MCF 10A (cell line): ENCODE measurements at regions of chrX and their contacts with region 1.

Region 1: DNA sequence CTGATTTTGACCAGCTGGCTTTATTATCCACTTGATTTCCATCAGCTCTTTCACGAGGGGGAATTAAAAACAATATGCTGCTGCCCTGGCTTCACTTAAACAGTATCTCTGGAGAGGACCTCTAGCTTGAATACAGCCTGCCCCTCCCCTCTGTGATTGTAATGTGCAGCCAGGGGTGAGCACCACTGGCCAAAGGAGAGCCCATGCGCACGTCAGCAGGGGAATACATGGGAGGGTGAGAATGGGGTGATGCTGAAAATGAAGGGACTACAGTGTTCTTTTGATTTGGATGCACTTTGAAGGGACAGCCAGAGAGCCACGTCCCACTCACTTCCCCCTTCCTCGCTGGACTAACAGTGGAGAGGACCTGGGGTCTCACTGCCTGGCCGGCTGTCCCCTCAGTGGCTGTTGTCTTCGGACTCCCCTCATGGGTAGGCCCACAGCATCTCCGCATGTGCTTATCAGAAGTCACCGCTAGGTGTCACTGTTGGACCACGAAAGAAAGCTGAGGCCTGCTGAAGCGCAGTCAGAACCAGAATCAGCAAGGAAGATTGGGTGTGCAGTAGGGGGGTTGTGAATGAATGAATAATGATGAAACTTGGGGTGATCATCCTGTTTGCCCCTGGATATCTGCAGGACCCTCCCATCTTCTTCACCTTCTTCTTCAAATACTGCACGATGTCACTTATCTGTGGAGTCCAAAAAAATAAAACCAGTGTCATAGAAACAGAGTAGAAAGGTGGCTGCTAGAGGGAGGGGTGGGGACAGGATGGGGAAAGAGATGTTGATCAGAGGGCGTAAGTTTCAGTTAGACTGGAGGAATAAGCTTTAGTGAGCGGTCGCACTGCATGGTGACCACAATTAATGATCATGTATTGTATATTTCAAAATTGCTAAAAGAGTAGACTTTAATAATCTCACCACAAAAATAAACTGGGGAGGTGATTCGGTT is 32.8 kb downstream of the CLCN4 start:
- DNase-seq: peak; percentile 78
- H3K4me3 Mint-ChIP-seq: no peak overlapping the region
- H3K27ac Mint-ChIP-seq: no peak overlapping the region
- H3K4me1 Mint-ChIP-seq: no peaks in the 10 kb centered on the region
- H3K27me3 Mint-ChIP-seq: peaks cover 26% of the 10 kb centered on the region
- CTCF ChIP-seq: peak; percentile 83

Region 2: DNA sequence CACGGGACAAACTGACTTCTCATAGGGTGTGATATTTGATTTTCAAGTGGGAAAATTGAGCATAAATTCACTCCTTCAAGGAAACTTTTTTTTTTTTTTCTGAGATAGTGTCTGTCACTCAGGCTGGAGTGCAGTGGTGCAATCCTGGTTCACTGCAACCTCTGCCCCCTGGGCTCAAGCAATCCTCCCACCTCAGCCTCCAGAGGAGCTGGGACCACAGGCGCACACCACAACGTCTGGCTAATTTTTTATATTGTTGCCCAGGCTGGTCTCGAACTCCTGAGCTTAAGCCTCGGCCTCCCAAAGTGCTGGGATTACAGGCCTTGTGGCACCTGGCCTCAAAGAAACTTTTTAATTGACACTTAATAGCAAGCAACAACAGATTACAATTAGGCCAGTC is 208.7 kb before region 1 on chrX:
- CTCF ChIA-PET with region 1: no interaction called
- POLR2A ChIA-PET with region 1: no interaction called
- intact Hi-C with region 1: no loop called
- DNase-seq: no peak
- H3K4me3 Mint-ChIP-seq: no peak overlapping the region
- H3K27ac Mint-ChIP-seq: no peak overlapping the region
- H3K4me1 Mint-ChIP-seq: no peaks in the 10 kb centered on the region
- H3K27me3 Mint-ChIP-seq: peaks cover 11% of the 10 kb centered on the region
- CTCF ChIP-seq: no peak

Region 3: DNA sequence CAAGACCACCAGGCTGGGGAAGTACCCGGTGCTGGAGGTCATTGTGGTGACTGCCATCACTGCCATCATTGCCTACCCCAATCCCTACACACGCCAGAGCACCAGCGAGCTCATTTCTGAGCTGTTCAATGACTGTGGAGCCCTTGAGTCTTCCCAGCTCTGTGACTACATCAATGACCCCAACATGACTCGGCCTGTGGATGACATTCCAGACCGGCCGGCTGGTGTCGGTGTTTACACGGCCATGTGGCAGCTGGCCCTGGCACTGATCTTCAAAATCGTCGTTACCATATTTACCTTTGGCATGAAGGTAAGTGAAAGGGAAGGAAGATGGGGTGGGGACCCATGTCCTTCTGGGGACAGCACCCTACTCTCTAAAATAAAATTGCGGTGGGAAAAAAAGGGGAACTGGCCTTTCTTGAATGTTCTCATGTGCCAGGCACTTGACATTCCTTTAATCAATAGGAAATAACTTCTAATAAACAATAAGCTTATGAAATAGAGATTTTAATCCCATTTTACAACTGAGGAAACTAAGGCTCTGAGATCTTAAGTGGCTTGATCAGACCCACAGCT is 18.8 kb after region 1 on chrX:
- CTCF ChIA-PET with region 1: interaction called, 28 read pairs
- POLR2A ChIA-PET with region 1: no interaction called
- intact Hi-C with region 1: no loop called
- DNase-seq: no peak
- H3K4me3 Mint-ChIP-seq: no peak overlapping the region
- H3K27ac Mint-ChIP-seq: no peak overlapping the region
- H3K4me1 Mint-ChIP-seq: no peaks in the 10 kb centered on the region
- H3K27me3 Mint-ChIP-seq: peaks cover 11% of the 10 kb centered on the region
- CTCF ChIP-seq: no peak

Region 4: DNA sequence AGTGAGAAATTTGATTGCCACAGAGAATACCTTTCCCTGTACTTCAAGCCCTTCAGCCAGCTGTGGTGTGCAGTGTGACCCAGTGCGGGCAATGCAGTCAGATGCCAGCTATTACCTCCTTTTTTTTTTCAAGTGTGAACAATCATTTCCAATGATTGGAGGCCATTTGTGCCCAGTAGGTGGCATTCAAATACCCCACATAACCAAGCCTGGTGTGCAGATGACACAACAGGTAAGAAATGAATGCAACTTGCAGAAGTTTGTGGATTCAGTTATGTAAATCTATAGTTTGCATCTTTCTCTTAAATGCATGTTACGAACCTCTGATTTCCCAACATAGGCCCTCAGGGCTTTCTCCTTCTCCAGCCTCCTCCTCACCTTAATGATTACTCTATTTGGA is 65.1 kb after region 1 on chrX:
- CTCF ChIA-PET with region 1: interaction called, 10 read pairs
- POLR2A ChIA-PET with region 1: no interaction called
- intact Hi-C with region 1: loop called (anchors 1 kb)
- DNase-seq: peak; percentile 26
- H3K4me3 Mint-ChIP-seq: no peak overlapping the region
- H3K27ac Mint-ChIP-seq: no peak overlapping the region
- H3K4me1 Mint-ChIP-seq: no peaks in the 10 kb centered on the region
- H3K27me3 Mint-ChIP-seq: no peaks in the 10 kb centered on the region
- CTCF ChIP-seq: peak; percentile 35

Region 5: DNA sequence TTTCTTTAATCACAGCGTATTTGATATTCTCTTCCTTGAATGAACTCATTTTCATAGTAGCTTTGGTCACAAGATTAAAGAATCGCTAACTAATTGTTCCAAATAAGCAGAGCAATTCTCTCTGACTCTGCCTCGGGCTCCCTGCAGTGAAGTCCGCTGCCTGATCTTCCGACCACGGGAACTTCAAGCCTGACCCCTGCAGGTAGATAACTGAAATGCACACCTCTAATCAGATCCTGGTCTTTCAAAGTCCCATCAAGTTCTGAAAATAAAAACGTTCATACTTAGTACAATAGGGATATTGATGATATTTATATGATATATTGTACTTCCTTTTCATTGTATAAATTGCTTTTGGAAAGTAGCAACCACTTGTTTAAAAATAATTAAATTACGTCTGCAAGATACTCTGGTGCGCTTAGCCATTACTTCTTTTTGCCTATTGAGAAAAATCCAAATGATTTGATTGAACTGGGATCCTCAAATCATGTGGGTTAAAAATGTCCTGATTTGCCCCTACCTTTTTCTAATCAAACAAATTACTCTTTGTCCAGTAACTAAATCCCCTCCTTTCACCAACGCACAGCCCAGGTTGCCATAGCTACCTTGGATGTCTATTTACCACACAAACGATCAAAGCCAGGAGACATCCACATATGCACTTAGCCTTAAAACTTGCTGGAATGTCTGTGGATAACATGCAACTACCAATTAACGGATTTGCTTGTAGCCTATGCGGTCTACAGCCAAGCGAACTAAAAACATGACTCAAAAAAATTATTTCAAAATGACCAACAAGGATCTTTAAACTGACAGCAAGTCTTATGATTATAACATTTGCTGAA is 426.6 kb after region 1 on chrX:
- CTCF ChIA-PET with region 1: interaction called, 128 read pairs
- POLR2A ChIA-PET with region 1: interaction called, 4 read pairs
- intact Hi-C with region 1: loop called (anchors 1 kb)
- DNase-seq: peak; percentile 71
- H3K4me3 Mint-ChIP-seq: peak overlapping the region; percentile 35
- H3K27ac Mint-ChIP-seq: no peak overlapping the region
- H3K4me1 Mint-ChIP-seq: peaks cover 48% of the 10 kb centered on the region
- H3K27me3 Mint-ChIP-seq: no peaks in the 10 kb centered on the region
- CTCF ChIP-seq: peak; percentile 60

Region 6: DNA sequence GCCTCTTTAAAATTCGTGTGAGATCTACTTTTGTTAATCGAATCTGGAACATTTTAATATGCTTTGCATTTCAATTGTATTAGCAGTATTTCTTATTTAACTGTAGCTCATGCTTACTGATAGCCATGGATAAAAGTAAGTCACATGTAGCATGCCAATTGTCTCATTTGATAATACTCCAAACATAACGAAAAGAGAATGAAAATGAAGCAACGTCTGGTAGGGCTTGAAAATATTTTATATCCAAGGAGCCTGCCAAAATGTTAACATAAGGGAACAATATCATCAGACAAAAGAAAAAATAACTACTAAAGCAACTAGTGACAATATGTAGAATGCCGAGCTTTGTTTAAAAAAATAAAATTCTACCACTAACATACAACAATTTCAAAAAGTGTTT is 524.9 kb after region 1 on chrX:
- CTCF ChIA-PET with region 1: interaction called, 14 read pairs
- POLR2A ChIA-PET with region 1: no interaction called
- intact Hi-C with region 1: no loop called
- DNase-seq: no peak
- H3K4me3 Mint-ChIP-seq: no peak overlapping the region
- H3K27ac Mint-ChIP-seq: no peak overlapping the region
- H3K4me1 Mint-ChIP-seq: no peaks in the 10 kb centered on the region
- H3K27me3 Mint-ChIP-seq: peaks cover 46% of the 10 kb centered on the region
- CTCF ChIP-seq: no peak

Region 7: DNA sequence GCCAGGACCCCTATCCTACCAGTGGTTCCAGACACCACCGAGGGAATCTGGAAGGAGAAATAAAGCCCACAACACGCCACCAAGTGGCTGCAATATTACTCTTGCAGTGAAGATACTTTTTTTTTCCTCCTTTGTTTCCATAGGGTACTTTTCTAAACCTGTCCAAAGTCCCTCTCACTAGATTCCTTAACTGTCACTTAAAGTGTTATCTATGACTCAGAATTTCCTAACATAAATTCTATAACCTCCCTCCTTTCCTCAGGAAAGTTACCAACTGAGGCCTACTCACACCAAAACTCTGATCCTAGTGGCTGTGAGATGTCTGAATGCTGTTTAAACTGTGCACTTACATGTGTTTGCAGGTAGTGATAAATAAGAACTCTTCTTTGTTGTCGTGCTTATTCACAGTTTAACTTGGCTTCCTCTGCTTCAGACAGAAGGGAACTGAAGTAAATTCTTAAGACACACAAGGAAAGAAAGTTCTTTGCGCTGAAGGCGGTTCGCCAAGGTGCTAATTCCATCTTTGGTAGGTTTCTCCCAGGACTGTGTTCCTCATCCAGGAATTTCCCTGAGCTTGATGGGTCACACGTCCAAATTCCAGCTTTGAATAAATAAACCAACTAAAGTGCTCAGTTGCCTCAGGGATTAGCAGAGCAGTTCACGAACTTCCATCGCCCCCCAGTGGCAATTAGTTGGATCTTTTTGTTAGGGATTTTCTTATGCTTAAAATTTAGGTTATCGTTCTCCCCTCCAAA is 910.9 kb after region 1 on chrX:
- CTCF ChIA-PET with region 1: interaction called, 20 read pairs
- POLR2A ChIA-PET with region 1: interaction called, 3 read pairs
- intact Hi-C with region 1: loop called (anchors 1 kb)
- DNase-seq: peak; percentile 72
- H3K4me3 Mint-ChIP-seq: no peak overlapping the region
- H3K27ac Mint-ChIP-seq: peak overlapping the region; percentile 44
- H3K4me1 Mint-ChIP-seq: no peaks in the 10 kb centered on the region
- H3K27me3 Mint-ChIP-seq: no peaks in the 10 kb centered on the region
- CTCF ChIP-seq: peak; percentile 51